A673 (cell line): ENCODE measurements at regions of chr20 and their contacts with region 1.

Region 1: GRCh38 chr20:9321007-9321406 is 193.4 kb upstream of the LAMP5 start:
- DNase-seq: no peak
- H3K4me3 ChIP-seq: no peak overlapping the region
- H3K27ac ChIP-seq: no peak overlapping the region
- H3K4me1 ChIP-seq: peaks cover 11% of the 10 kb centered on the region
- H3K27me3 ChIP-seq: no peaks in the 10 kb centered on the region
- CTCF ChIP-seq: no peak

Region 2: GRCh38 chr20:9025643-9026042 is 295.4 kb before region 1 on chr20:
- CTCF ChIA-PET with region 1: no interaction called
- POLR2A ChIA-PET with region 1: no interaction called
- intact Hi-C with region 1: no loop called
- DNase-seq: no peak
- H3K4me3 ChIP-seq: no peak overlapping the region
- H3K27ac ChIP-seq: no peak overlapping the region
- H3K4me1 ChIP-seq: peaks cover 16% of the 10 kb centered on the region
- H3K27me3 ChIP-seq: no peaks in the 10 kb centered on the region
- CTCF ChIP-seq: no peak

Region 3: GRCh38 chr20:9375221-9375681 is 54.2 kb after region 1 on chr20:
- CTCF ChIA-PET with region 1: no interaction called
- POLR2A ChIA-PET with region 1: interaction called, 10 read pairs
- intact Hi-C with region 1: no loop called
- DNase-seq: no peak
- H3K4me3 ChIP-seq: no peak overlapping the region
- H3K27ac ChIP-seq: no peak overlapping the region
- H3K4me1 ChIP-seq: no peaks in the 10 kb centered on the region
- H3K27me3 ChIP-seq: no peaks in the 10 kb centered on the region
- CTCF ChIP-seq: no peak